ENCODE measurements at regions of chr17 and their contacts with region 1.

Region 1: GRCh38 chr17:59521204-59522126 is 43.9 kb upstream of the DHX40 start:
- DNase-seq: peak; percentile 77
- H3K4me3 Mint-ChIP-seq: no peak overlapping the region
- H3K27ac Mint-ChIP-seq: no peak overlapping the region
- H3K4me1 Mint-ChIP-seq: peaks cover 5% of the 10 kb centered on the region
- H3K27me3 Mint-ChIP-seq: peaks cover 10% of the 10 kb centered on the region

Region 2: DNA sequence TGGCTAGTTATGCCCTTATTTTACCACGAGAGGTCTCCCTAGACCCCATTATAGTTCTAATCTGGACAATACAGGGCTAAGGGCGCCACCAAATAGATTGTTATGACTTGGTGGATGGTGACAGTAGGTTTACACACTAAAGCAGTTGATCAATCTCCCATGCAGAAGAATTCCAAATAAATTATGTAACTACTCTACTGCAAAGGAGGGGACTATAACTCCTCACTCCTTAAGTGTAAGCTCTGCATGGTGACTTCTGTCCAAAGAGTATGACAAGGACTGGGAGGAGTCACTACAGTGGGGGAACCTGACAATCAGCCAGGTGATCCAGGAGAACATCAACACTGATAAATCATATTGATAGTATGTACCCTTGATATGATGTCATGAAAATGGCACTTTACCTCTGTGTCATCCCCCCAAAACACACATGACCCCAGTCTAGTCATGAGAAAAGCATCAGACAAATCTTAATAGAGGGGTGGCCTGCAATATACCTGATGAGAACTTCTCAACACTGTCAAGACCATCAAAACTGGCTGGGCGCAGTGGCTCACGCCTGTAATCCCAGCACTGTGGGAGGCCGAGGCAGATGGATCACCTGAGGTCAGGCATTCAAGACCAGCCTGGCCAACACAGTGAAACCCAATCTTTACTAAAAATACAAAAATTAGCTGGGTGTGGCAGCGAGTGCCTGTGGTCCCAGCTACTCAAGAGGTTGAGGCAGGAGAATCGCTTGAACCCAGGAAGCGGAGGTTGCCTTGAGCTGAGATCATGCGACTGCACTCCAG is 210.1 kb before region 1 on chr17:
- CTCF ChIA-PET with region 1: interaction called, 34 read pairs
- POLR2A ChIA-PET with region 1: no interaction called
- intact Hi-C with region 1: loop called (anchors 1 kb)
- DNase-seq: peak; percentile 39
- H3K4me3 Mint-ChIP-seq: no peak overlapping the region
- H3K27ac Mint-ChIP-seq: peak overlapping the region; percentile 5
- H3K4me1 Mint-ChIP-seq: peaks cover 3% of the 10 kb centered on the region
- H3K27me3 Mint-ChIP-seq: no peaks in the 10 kb centered on the region

Region 3: DNA sequence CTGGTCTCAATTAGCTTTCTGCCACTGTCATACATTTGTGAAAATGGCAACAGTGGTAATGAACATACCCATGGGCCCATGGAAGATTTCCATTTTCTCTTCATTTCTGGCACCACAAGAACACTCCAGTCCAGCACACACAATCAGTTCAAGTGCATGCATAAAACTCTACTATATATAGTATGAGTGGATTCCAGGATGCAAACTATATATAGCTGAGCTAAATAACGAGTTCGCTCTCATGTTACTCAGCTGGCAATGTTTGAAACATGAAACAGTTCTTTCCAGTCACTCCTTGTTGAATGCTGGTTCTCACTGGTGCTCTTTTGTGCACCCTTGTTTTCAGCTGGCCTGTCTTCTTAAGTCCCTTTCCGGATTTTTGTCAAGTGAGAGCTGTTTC is 31.2 kb before region 1 on chr17:
- CTCF ChIA-PET with region 1: no interaction called
- POLR2A ChIA-PET with region 1: no interaction called
- intact Hi-C with region 1: no loop called
- DNase-seq: no peak
- H3K4me3 Mint-ChIP-seq: no peak overlapping the region
- H3K27ac Mint-ChIP-seq: no peak overlapping the region
- H3K4me1 Mint-ChIP-seq: no peaks in the 10 kb centered on the region
- H3K27me3 Mint-ChIP-seq: peaks cover 7% of the 10 kb centered on the region

Region 4: DNA sequence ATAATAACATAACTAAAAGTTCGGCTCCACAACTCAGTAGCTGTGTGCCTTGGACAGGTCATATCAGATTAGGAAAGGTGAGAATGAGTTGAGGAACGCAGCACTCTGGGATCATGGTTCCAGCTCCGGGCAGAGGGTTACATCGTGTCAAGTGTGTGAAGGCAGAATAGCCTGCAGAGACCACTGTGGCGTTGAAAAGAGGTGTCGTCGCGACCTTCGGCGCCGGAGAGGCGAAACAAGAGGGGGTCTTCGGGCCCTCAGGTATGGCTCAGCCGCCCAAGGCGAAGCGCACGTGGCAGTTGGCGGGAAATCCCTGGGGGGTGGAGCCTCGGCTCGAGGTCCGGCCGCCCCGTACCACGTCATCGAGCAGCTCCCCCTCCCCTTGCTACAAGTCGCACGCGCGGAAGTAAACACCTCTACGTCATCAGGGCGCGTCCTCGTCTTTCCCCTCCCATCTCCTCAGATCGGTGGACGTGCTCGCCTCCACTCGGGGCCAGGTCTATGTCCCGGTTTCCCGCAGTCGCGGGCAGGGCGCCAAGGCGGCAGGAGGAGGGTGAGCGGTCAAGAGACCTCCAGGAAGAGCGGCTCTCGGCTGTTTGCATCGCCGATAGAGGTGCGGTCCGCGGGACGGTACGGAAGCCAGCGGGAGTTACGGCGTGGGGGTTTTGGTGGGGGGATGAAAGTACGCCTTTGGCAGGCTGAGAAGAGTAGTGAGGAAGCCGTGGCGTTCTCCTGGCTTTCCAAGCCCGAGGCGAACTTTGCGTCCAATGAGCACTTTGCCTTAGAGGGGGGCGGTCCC is 43.9 kb after region 1 on chr17 and contains the start of gene DHX40:
- CTCF ChIA-PET with region 1: interaction called, 3 read pairs
- POLR2A ChIA-PET with region 1: no interaction called
- intact Hi-C with region 1: loop called (anchors 5 kb)
- DNase-seq: peak; percentile 97
- H3K4me3 Mint-ChIP-seq: peak within 1 kb of the TSS; percentile 100
- H3K27ac Mint-ChIP-seq: peak within 1 kb of the TSS; percentile 94
- H3K4me1 Mint-ChIP-seq: peaks cover 22% of the 10 kb centered on the region
- H3K27me3 Mint-ChIP-seq: peaks cover 3% of the 10 kb centered on the region
- total RNA-seq, gene DHX40: 17.9 to 19.0 TPM

Region 5: GRCh38 chr17:59607817-59608403 is 86.4 kb after region 1 on chr17:
- CTCF ChIA-PET with region 1: no interaction called
- POLR2A ChIA-PET with region 1: no interaction called
- intact Hi-C with region 1: loop called (anchors 10 kb)
- DNase-seq: peak; percentile 62
- H3K4me3 Mint-ChIP-seq: no peak overlapping the region
- H3K27ac Mint-ChIP-seq: no peak overlapping the region
- H3K4me1 Mint-ChIP-seq: no peaks in the 10 kb centered on the region
- H3K27me3 Mint-ChIP-seq: no peaks in the 10 kb centered on the region

Region 6: GRCh38 chr17:59712862-59713261 is 191.4 kb after region 1 on chr17:
- CTCF ChIA-PET with region 1: no interaction called
- POLR2A ChIA-PET with region 1: no interaction called
- intact Hi-C with region 1: no loop called
- DNase-seq: no peak
- H3K4me3 Mint-ChIP-seq: no peak overlapping the region
- H3K27ac Mint-ChIP-seq: no peak overlapping the region
- H3K4me1 Mint-ChIP-seq: peaks cover 52% of the 10 kb centered on the region
- H3K27me3 Mint-ChIP-seq: no peaks in the 10 kb centered on the region

Region 7: GRCh38 chr17:59746849-59747445 is 225.5 kb after region 1 on chr17:
- CTCF ChIA-PET with region 1: no interaction called
- POLR2A ChIA-PET with region 1: no interaction called
- intact Hi-C with region 1: loop called (anchors 5 kb)
- DNase-seq: no peak
- H3K4me3 Mint-ChIP-seq: no peak overlapping the region
- H3K27ac Mint-ChIP-seq: peak overlapping the region; percentile 56
- H3K4me1 Mint-ChIP-seq: peaks cover 25% of the 10 kb centered on the region
- H3K27me3 Mint-ChIP-seq: no peaks in the 10 kb centered on the region

Measured in activated CD4-positive, alpha-beta memory T cell treated with anti-CD3 and anti-CD28 coated beads for 36 hours (primary cell).